ENCODE measurements at regions of chr17 and their contacts with region 1.

Region 1: DNA sequence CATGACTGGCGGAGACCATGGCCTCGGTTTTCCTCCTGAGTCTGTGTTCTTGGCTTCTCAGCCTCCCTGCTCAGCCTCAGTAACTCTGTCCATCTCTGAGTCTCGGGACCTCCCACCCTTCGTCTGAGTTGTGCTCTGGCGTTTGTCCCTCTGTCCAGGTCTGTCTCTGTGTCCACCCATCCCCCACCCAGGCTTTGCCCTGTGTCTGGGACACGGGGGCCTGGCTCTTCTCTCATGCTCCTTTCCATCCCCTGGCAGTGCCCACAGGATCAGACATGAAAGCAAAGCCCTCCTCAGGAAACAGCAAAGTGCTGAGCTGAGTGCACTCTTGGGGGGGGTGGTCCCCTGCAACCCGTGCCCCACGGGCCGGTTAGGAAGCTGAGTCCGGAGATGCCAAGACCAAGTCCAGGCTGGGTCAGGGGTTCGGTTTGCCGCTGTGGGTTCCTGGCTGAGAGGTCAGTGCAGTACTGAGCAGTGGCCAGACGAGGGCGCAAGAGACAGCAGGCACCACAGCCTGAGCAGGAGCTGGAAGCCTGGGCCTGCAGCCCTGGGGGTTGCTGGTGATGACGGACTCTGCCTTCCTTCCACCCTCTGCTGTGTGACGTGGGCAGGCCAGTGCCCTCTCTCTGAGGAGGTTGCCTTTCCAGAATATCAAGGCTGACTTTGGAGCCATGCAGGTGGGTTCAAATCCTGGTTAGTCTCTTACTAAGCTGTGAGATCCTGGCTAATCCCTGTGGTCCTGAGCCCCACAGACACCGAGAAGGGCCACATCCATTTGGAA is 2.5 kb downstream of the P2RX1 start:
- DNase-seq: peak; percentile 90
- H3K4me3 Mint-ChIP-seq: no peak overlapping the region
- H3K27ac Mint-ChIP-seq: no peak overlapping the region
- H3K4me1 Mint-ChIP-seq: peaks cover 50% of the 10 kb centered on the region
- H3K27me3 Mint-ChIP-seq: no peaks in the 10 kb centered on the region

Region 2: GRCh38 chr17:3893003-3893719 is 20.6 kb before region 1 on chr17 and contains the start of gene CAMKK1:
- CTCF ChIA-PET with region 1: interaction called, 7 read pairs
- intact Hi-C with region 1: loop called (anchors 1 kb)
- DNase-seq: peak; percentile 88
- H3K4me3 Mint-ChIP-seq: peak within 1 kb of the TSS; percentile 78
- H3K27ac Mint-ChIP-seq: peak within 1 kb of the TSS; percentile 65
- H3K4me1 Mint-ChIP-seq: peaks cover 31% of the 10 kb centered on the region
- H3K27me3 Mint-ChIP-seq: no peaks in the 10 kb centered on the region
- total RNA-seq, gene CAMKK1: 2.4 to 2.7 TPM

Region 3: DNA sequence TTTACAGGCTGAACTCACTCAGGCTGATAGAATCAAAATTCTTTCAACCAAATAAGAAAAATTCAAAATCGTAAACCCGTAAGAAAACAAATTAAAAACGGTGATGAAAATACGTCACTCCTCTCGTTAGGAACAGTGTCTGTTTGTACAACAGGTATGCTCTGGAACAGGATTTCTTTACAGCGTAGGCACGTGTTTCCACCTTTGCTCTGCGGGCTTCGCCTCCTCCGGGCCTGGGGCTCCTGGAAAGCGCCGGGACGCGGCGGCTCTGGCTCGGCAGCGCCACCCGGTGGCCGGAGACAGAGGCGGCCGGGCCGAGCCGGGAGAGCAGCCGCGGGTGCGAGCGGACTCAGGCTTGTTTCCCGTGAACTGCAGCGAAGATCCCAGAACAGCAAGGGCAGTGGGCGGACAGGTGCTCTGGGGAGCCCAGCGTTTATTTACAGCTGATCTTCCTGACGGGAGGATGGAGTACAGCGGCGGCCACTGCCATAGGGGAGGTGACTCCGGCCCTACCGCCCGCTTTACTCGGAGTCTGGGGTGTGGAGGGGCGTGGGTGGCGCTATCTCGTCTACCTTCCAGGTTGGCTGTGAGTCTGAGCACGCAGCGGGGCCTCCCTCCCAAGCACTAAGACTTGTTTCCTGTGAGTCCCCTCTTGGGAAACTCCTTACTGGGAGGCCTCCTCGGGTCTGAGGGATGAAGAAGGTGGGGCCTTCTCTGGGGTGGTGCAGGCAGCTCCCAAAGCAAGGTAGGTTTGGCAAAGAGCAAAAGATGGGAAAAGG is 91.0 kb after region 1 on chr17:
- CTCF ChIA-PET with region 1: interaction called, 46 read pairs
- intact Hi-C with region 1: loop called (anchors 1 kb)
- DNase-seq: peak; percentile 62
- H3K4me3 Mint-ChIP-seq: no peak overlapping the region
- H3K27ac Mint-ChIP-seq: no peak overlapping the region
- H3K4me1 Mint-ChIP-seq: peaks cover 4% of the 10 kb centered on the region
- H3K27me3 Mint-ChIP-seq: no peaks in the 10 kb centered on the region

Region 4: DNA sequence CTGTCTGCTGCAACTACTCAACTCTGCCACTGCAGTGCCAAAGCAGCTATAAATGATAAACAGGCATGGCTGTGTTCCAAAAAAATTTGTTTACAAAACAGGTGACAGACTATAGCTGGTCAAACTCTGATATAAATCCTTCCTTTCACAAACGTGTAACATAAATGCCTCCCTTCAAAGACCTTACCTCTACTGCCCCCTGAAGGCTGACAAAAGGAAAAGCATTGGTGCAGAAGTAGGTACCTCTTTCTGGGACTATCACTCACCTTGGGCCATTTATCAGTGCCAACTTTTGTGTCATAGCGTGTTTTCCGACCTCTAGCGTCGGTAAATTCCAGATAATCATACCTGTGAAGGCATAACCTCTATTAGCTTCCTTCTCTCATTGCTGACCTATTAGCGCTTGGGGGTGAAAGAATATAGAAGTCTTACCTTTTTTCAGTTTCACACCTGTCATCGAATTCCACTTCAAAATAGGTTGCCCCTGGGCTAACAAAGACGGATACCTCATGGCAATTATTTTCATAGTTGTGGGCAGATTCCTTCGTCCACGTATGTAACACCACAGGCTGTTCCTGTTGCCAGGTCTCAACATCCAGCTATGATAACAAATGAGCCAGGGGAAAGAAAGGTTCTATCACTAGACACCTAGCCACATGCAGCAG is 161.2 kb after region 1 on chr17:
- CTCF ChIA-PET with region 1: interaction called, 11 read pairs
- intact Hi-C with region 1: loop called (anchors 5 kb)
- DNase-seq: no peak
- H3K4me3 Mint-ChIP-seq: no peak overlapping the region
- H3K27ac Mint-ChIP-seq: no peak overlapping the region
- H3K4me1 Mint-ChIP-seq: no peaks in the 10 kb centered on the region
- H3K27me3 Mint-ChIP-seq: no peaks in the 10 kb centered on the region

Measured in activated naive CD4-positive, alpha-beta T cell treated with anti-CD3 and anti-CD28 coated beads for 36 hours (primary cell).